Naive thymus-derived CD4-positive, alpha-beta T cell (primary cell): ENCODE measurements at regions of chr4 and their contacts with region 1.

Region 1: GRCh38 chr4:163544407-163545038 is 50.0 kb downstream of the TMA16 start:
- DNase-seq: peak in 7 of 9 donors; percentile 21 to 58 (median 43)
- ATAC-seq: peak; percentile 95
- H3K4me3 ChIP-seq: peak overlapping the region; percentile 46
- H3K4me3 Mint-ChIP-seq: no peak overlapping the region
- H3K27ac ChIP-seq: no peak overlapping the region
- H3K27ac Mint-ChIP-seq: no peak overlapping the region
- H3K4me1 ChIP-seq: peaks cover 0 to 2% of the 10 kb centered on the region in 2 donors
- H3K4me1 Mint-ChIP-seq: peaks cover 0 to 11% (median 9%) of the 10 kb centered on the region in 7 donors
- H3K27me3 ChIP-seq: no peaks in the 10 kb centered on the region
- H3K27me3 Mint-ChIP-seq: no peaks in the 10 kb centered on the region

Region 2: GRCh38 chr4:162497564-162498167 is 1046.9 kb before region 1 on chr4:
- CTCF ChIA-PET with region 1: no interaction called
- POLR2A ChIA-PET with region 1: no interaction called
- intact Hi-C with region 1: loop called (anchors 1 kb)
- DNase-seq: peak in 6 of 9 donors; percentile 11 to 43 (median 30)
- ATAC-seq: peak; percentile 71
- H3K4me3 ChIP-seq: no peak overlapping the region
- H3K4me3 Mint-ChIP-seq: no peak overlapping the region
- H3K27ac ChIP-seq: no peak overlapping the region
- H3K27ac Mint-ChIP-seq: no peak overlapping the region
- H3K4me1 ChIP-seq: no peaks in the 10 kb centered on the region
- H3K4me1 Mint-ChIP-seq: no peaks in the 10 kb centered on the region
- H3K27me3 ChIP-seq: no peaks in the 10 kb centered on the region
- H3K27me3 Mint-ChIP-seq: peaks cover 0 to 11% (median 0%) of the 10 kb centered on the region in 5 donors

Region 3: DNA sequence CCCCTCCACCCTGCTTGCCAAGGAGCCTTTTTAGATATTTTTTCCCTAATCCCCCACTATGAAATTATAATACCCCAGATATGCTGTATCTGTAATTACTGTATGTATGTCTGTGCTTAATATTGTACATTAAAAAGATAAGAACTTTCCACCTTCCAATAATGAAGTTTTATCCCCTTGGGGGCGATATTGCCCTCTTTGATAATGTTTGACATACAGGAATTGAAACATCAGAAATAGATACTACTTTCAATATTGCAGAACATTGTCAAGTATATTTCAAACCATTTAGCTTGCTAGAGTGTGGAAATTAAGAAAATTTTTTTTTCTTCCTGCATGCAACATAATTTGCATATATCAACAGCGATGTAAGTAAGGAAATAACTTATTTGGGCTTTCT is 436.8 kb before region 1 on chr4:
- CTCF ChIA-PET with region 1: no interaction called
- POLR2A ChIA-PET with region 1: interaction called, 3 read pairs
- intact Hi-C with region 1: loop called (anchors 1 kb)
- DNase-seq: peak in 2 of 9 donors; percentile 4 to 14
- ATAC-seq: no peak
- H3K4me3 ChIP-seq: no peak overlapping the region
- H3K4me3 Mint-ChIP-seq: no peak overlapping the region
- H3K27ac ChIP-seq: no peak overlapping the region
- H3K27ac Mint-ChIP-seq: no peak overlapping the region
- H3K4me1 ChIP-seq: no peaks in the 10 kb centered on the region
- H3K4me1 Mint-ChIP-seq: peaks cover 6 to 20% (median 14%) of the 10 kb centered on the region in 7 donors
- H3K27me3 ChIP-seq: no peaks in the 10 kb centered on the region
- H3K27me3 Mint-ChIP-seq: no peaks in the 10 kb centered on the region

Region 4: GRCh38 chr4:163332500-163333406 is 211.8 kb before region 1 on chr4 and contains the start of gene NPY1R:
- CTCF ChIA-PET with region 1: no interaction called
- POLR2A ChIA-PET with region 1: no interaction called
- intact Hi-C with region 1: loop called in 1 of 2 experiments (anchors 10 kb)
- DNase-seq: peak in 4 of 9 donors; percentile 5 to 27 (median 11)
- ATAC-seq: no peak
- H3K4me3 ChIP-seq: peak within 1 kb of the TSS; percentile 30
- H3K4me3 Mint-ChIP-seq: peak within 1 kb of the TSS; percentile 34 to 76 (median 66)
- H3K27ac ChIP-seq: no peak within 1 kb of the TSS
- H3K27ac Mint-ChIP-seq: no peak within 1 kb of the TSS
- H3K4me1 ChIP-seq: peaks cover 5 to 6% of the 10 kb centered on the region in 2 donors
- H3K4me1 Mint-ChIP-seq: peaks cover 5 to 18% (median 16%) of the 10 kb centered on the region in 7 donors
- H3K27me3 ChIP-seq: peaks cover 0 to 5% of the 10 kb centered on the region in 2 donors
- H3K27me3 Mint-ChIP-seq: peaks cover 56 to 70% (median 68%) of the 10 kb centered on the region in 5 donors
- total RNA-seq, gene NPY1R: not detected

Region 5: DNA sequence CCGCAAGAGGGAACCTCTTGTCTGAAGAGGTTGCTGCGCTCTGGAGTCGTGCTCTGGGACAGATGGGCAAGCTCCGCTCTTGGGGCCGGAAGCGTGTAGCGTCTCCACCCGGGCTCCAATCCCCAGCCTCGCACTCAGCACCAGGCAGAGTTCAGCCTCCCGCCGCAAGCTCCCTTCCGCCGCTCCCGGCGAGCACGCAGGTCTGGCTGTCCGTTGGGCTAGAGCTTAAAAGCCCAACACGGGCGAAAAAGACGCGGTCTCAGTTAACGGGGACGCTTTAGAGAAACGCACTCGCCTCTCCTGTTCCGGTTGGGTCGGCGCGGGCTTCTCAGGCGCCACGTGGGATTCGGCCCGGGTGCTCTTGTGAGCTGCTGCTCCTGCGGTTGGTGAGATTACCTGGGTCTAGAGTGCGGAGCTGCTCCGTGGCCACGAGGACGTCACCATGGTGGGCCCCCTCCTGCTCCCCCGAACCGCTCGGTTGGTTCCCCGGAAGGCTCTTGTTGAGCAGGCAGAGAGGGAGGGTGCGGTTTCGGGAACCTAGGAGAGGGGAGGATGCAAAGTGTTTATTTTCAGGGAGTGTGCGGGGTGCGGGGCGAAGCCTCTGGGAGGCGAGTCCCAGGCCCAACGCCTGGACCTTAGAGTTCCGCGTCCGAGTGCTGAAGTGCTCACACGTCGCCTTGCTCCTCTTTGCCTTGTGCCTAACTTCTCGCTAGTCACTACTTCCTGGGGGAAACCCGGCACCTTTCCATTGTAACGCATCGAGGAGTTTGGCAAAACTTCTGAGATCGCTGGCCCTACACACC is 50.0 kb before region 1 on chr4 and contains the start of gene TMA16:
- CTCF ChIA-PET with region 1: interaction called, 5 read pairs
- POLR2A ChIA-PET with region 1: interaction called, 4 read pairs
- intact Hi-C with region 1: loop called (anchors 1 to 2 kb)
- DNase-seq: peak; percentile 56 to 87 (median 76)
- ATAC-seq: peak; percentile 89
- H3K4me3 ChIP-seq: peak within 1 kb of the TSS; percentile 94
- H3K4me3 Mint-ChIP-seq: peak within 1 kb of the TSS; percentile 92 to 100 (median 98)
- H3K27ac ChIP-seq: peak within 1 kb of the TSS; percentile 83
- H3K27ac Mint-ChIP-seq: peak within 1 kb of the TSS; percentile 78 to 99 (median 96)
- H3K4me1 ChIP-seq: peaks cover 7% of the 10 kb centered on the region in 2 donors
- H3K4me1 Mint-ChIP-seq: peaks cover 20 to 44% (median 36%) of the 10 kb centered on the region in 7 donors
- H3K27me3 ChIP-seq: no peaks in the 10 kb centered on the region
- H3K27me3 Mint-ChIP-seq: peaks cover 0 to 12% (median 5%) of the 10 kb centered on the region in 5 donors
- total RNA-seq, gene TMA16: 10.5 to 38.7 (median 20.7) TPM

Region 6: DNA sequence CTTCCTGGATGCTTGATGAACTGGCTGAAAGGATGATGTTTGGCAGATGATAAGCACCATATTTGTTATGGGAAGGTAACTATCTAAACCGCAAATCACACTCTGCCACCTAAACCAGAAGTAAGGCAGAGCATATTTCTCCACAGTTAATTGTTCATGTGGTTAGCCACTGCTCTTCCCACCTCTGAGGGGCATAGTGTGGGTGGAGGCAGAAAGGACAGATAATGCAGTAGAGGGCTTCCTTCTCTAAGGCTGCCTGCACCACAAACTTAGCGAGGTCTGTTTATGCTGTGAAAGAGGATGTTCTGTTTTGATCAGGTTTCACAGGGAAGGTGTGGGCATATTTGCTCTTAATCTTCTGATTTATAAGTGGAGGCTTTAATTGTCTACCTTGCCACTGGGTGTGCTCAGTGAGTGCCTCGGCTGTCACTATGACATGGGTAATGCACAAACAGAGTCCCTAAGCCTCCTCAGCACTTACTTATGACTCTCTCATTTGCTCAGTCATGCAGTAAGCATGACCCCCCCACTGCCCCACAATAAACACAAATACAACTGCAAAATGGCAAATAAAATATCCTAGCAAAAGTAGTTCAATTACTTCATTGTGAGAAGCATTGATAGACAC is 351.0 kb after region 1 on chr4:
- CTCF ChIA-PET with region 1: no interaction called
- POLR2A ChIA-PET with region 1: no interaction called
- intact Hi-C with region 1: loop called in 1 of 2 experiments (anchors 2 kb)
- DNase-seq: peak in 7 of 9 donors; percentile 25 to 84 (median 43)
- ATAC-seq: peak; percentile 71
- H3K4me3 ChIP-seq: no peak overlapping the region
- H3K4me3 Mint-ChIP-seq: peak overlapping the region in 8 of 10 donors; percentile 24 to 65 (median 51)
- H3K27ac ChIP-seq: no peak overlapping the region
- H3K27ac Mint-ChIP-seq: peak overlapping the region in 7 of 9 donors; percentile 22 to 85 (median 63)
- H3K4me1 ChIP-seq: peaks cover 0 to 5% of the 10 kb centered on the region in 2 donors
- H3K4me1 Mint-ChIP-seq: peaks cover 0 to 43% (median 27%) of the 10 kb centered on the region in 7 donors
- H3K27me3 ChIP-seq: no peaks in the 10 kb centered on the region
- H3K27me3 Mint-ChIP-seq: peaks cover 0 to 7% (median 0%) of the 10 kb centered on the region in 5 donors

Region 7: GRCh38 chr4:164572877-164573279 is 1028.4 kb after region 1 on chr4:
- CTCF ChIA-PET with region 1: no interaction called
- POLR2A ChIA-PET with region 1: no interaction called
- intact Hi-C with region 1: no loop called
- DNase-seq: no peak
- ATAC-seq: no peak
- H3K4me3 ChIP-seq: no peak overlapping the region
- H3K4me3 Mint-ChIP-seq: no peak overlapping the region
- H3K27ac ChIP-seq: no peak overlapping the region
- H3K27ac Mint-ChIP-seq: no peak overlapping the region
- H3K4me1 ChIP-seq: no peaks in the 10 kb centered on the region
- H3K4me1 Mint-ChIP-seq: no peaks in the 10 kb centered on the region
- H3K27me3 ChIP-seq: no peaks in the 10 kb centered on the region
- H3K27me3 Mint-ChIP-seq: no peaks in the 10 kb centered on the region